Common myeloid progenitor, CD34-positive (primary cell): ENCODE measurements at regions of chr19 and their contacts with region 1.

Region 1: GRCh38 chr19:13093407-13094105 is 9.1 kb downstream of the LYL1 start:
- DNase-seq: peak; percentile 88 to 93 (median 92)
- H3K4me3 ChIP-seq: peak overlapping the region in 3 of 7 experiments; percentile 32 to 98 (median 83)
- H3K27ac ChIP-seq: peak overlapping the region in 1 of 2 experiments; percentile 19
- H3K4me1 ChIP-seq: peaks cover 0 to 67% (median 53%) of the 10 kb centered on the region in 4 experiments
- H3K27me3 ChIP-seq: no peaks in the 10 kb centered on the region

Region 2: DNA sequence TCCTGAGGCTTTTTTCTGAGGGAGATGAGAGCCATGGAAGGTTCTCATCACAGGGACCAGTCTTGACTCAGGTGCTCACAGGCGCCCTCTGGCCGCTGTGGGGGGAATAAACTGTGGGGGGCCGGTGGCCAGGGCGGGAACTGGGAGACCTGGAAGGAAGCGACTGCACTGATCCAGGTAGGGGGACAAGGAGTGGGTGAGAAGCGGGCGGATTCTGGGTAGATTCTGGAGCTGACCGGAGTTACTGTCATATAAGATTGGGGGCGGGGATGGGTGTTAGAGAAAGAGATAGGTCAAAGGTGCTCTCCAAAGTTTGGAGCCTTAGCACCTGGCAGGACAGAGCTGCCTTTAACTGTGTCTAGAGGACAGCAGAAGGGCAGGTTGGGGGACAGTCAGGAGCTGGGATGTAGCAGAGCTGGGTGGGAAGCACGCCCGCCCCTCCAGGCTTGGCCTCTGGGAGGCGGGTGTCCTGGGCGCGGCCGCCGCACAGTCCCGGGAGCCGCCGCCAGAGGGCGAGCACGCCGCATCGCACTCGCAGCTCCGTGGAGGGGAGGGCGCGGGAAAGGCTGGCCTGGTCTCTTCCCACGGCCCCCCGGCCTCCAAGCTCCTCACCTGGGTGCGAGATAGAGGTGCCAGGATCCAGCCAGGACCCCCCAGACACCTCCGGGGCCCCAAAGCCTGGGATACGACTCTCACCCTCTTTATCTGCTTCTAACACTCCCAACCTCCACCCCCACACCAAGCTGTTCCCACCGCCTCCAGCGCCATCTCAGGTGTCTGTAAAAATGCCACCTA is 128.3 kb before region 1 on chr19:
- CTCF ChIA-PET with region 1: interaction called, 12 read pairs
- POLR2A ChIA-PET with region 1: no interaction called
- DNase-seq: peak; percentile 73 to 78 (median 76)
- H3K4me3 ChIP-seq: peak overlapping the region; percentile 38 to 87 (median 69)
- H3K27ac ChIP-seq: peak overlapping the region in 1 of 2 experiments; percentile 79
- H3K4me1 ChIP-seq: peaks cover 0 to 15% (median 6%) of the 10 kb centered on the region in 4 experiments
- H3K27me3 ChIP-seq: no peaks in the 10 kb centered on the region

Region 3: DNA sequence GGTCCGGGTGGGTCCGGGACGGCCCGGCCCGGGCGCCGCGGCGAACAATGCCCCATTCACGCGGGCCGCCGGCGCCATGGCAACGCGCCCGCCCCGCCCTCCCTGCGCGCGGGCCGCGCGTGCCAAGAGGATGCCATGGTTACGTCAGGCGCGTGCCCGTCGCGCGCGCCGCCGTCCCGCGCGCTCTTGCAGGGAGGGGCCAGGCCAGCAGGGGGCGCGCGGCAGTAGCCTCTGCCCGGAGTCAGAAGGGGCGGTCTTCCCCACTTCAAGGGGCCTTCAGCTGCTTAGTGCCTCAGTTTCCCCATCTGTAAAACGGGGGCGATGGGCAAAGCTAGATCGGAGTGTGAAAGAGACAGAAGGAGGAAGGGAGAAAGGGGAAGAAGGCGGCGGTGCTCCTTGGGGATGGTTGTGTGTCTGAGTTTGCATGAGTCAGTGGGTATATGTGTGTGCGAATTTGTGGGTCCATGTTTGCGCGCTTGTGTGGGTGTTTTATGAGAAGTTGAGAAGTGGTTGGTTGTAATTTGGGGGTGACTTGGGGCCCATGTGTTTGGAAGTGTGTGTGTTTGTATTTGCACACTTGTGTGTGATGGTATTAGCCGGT is 109.9 kb before region 1 on chr19:
- CTCF ChIA-PET with region 1: interaction called, 154 read pairs
- POLR2A ChIA-PET with region 1: interaction called, 4 read pairs
- DNase-seq: peak; percentile 77 to 88 (median 87)
- H3K4me3 ChIP-seq: peak overlapping the region in 5 of 7 experiments; percentile 5 to 64 (median 32)
- H3K27ac ChIP-seq: no peak overlapping the region
- H3K4me1 ChIP-seq: peaks cover 0 to 8% (median 4%) of the 10 kb centered on the region in 4 experiments
- H3K27me3 ChIP-seq: peaks cover 0 to 3% (median 0%) of the 10 kb centered on the region in 5 experiments

Region 4: GRCh38 chr19:13044231-13044836 is 49.2 kb before region 1 on chr19:
- CTCF ChIA-PET with region 1: interaction called, 11 read pairs
- POLR2A ChIA-PET with region 1: no interaction called
- DNase-seq: peak in 1 of 3 donors; percentile 58
- H3K4me3 ChIP-seq: no peak overlapping the region
- H3K27ac ChIP-seq: no peak overlapping the region
- H3K4me1 ChIP-seq: peaks cover 2 to 18% (median 9%) of the 10 kb centered on the region in 4 experiments
- H3K27me3 ChIP-seq: no peaks in the 10 kb centered on the region

Region 5: GRCh38 chr19:13069415-13070359 is 23.9 kb before region 1 on chr19:
- CTCF ChIA-PET with region 1: interaction called, 73 read pairs
- POLR2A ChIA-PET with region 1: no interaction called
- DNase-seq: peak; percentile 84 to 93 (median 86)
- H3K4me3 ChIP-seq: peak overlapping the region in 2 of 7 experiments; percentile 20 to 30
- H3K27ac ChIP-seq: peak overlapping the region in 1 of 2 experiments; percentile 74
- H3K4me1 ChIP-seq: peaks cover 0 to 80% (median 49%) of the 10 kb centered on the region in 4 experiments
- H3K27me3 ChIP-seq: no peaks in the 10 kb centered on the region

Region 6: DNA sequence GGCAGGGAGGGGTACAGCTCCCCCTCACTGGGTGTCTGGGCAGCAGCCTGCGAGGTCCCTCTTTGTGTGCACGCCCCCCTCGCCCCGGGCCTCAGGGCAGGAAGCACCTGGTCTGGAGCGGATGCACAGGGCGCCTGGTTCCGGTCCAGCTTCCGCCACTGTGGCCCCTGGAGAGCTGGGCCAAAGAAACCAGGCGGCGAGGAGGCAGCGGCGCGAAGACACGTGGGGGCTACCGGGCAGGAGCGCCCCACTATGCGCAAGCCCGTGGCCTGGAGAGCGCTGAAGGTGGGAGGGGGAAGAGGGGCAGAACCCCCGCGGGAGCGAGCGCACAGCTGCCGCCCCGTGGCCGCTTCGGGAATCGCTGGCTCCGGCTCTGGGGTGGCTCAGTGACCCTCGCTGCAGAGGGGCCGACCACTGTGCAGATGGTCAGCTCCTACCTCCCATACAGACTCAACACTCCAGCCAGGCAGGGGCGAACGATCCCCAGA is 10.8 kb after region 1 on chr19:
- CTCF ChIA-PET with region 1: interaction called, 10 read pairs
- POLR2A ChIA-PET with region 1: interaction called, 27 read pairs
- DNase-seq: peak; percentile 98 to 100 (median 99)
- H3K4me3 ChIP-seq: peak overlapping the region in 6 of 7 experiments; percentile 1 to 100 (median 78)
- H3K27ac ChIP-seq: peak overlapping the region; percentile 90 to 95
- H3K4me1 ChIP-seq: peaks cover 3 to 62% (median 52%) of the 10 kb centered on the region in 4 experiments
- H3K27me3 ChIP-seq: no peaks in the 10 kb centered on the region

Region 7: GRCh38 chr19:13228561-13228960 is 135.0 kb after region 1 on chr19:
- CTCF ChIA-PET with region 1: no interaction called
- POLR2A ChIA-PET with region 1: no interaction called
- DNase-seq: no peak
- H3K4me3 ChIP-seq: no peak overlapping the region
- H3K27ac ChIP-seq: no peak overlapping the region
- H3K4me1 ChIP-seq: peaks cover 0 to 7% (median 2%) of the 10 kb centered on the region in 4 experiments
- H3K27me3 ChIP-seq: peaks cover 0 to 4% (median 0%) of the 10 kb centered on the region in 5 experiments